CD8-positive, alpha-beta T cell (primary cell): ENCODE measurements at regions of chr2 and their contacts with region 1.

Region 1: GRCh38 chr2:12716282-12717190 is at the start of gene TRIB2:
- DNase-seq: peak; percentile 86 to 96 (median 91)
- ATAC-seq: peak; percentile 79
- H3K4me3 ChIP-seq: peak within 1 kb of the TSS; percentile 82 to 96
- H3K4me3 Mint-ChIP-seq: peak within 1 kb of the TSS; percentile 97
- H3K27ac ChIP-seq: peak within 1 kb of the TSS; percentile 72 to 81
- H3K27ac Mint-ChIP-seq: peak within 1 kb of the TSS; percentile 93
- H3K4me1 ChIP-seq: peaks cover 35% of the 10 kb centered on the region
- H3K4me1 Mint-ChIP-seq: peaks cover 46% of the 10 kb centered on the region
- H3K27me3 ChIP-seq: no peaks in the 10 kb centered on the region
- H3K27me3 Mint-ChIP-seq: no peaks in the 10 kb centered on the region
- CTCF ChIP-seq: peak; percentile 38
- total RNA-seq, gene TRIB2: 46.6 to 54.4 TPM

Region 2: DNA sequence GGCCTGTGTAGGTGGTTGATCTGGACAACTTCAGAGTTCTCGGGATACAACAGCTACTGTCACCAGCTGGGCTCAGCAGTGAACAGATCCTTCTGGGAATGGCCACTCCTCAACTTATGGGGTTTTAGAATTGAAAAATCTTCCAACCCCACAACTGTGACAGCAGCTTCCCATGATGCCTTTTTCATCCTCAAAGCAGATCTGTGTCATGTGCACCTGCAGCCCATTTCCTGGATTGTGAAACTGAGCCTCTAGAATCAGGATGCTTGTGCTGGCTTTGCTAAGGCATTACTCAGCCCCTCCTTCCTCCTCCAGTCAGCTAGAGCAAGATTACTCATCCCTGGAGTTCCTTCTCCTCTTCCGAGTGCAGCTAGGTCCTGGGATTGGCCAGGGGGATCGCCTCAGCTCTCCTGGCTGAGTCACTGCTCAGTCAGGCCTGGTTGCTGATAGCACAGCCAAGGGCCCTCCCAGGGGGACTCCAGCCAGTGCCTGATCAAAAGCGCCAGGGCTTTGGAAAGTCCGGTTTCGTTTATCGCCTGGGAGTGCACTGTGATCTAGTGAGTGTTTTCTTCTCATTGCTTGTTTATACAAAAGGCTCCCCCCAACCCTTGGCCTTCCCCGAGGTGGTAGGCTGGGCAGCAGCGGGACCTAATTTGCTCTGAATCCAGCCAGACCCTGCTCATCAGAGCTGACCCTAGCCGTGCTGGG is 972.5 kb before region 1 on chr2:
- CTCF ChIA-PET with region 1: no interaction called
- POLR2A ChIA-PET with region 1: no interaction called
- intact Hi-C with region 1: loop called (anchors 2 to 5 kb)
- DNase-seq: peak in 8 of 9 experiments; percentile 48 to 86 (median 68)
- ATAC-seq: peak; percentile 25
- H3K4me3 ChIP-seq: peak overlapping the region in 1 of 2 experiments; percentile 9
- H3K4me3 Mint-ChIP-seq: peak overlapping the region; percentile 54
- H3K27ac ChIP-seq: peak overlapping the region in 1 of 2 experiments; percentile 20
- H3K27ac Mint-ChIP-seq: peak overlapping the region; percentile 56
- H3K4me1 ChIP-seq: peaks cover 41% of the 10 kb centered on the region
- H3K4me1 Mint-ChIP-seq: peaks cover 46% of the 10 kb centered on the region
- H3K27me3 ChIP-seq: no peaks in the 10 kb centered on the region
- H3K27me3 Mint-ChIP-seq: no peaks in the 10 kb centered on the region
- CTCF ChIP-seq: no peak

Region 3: DNA sequence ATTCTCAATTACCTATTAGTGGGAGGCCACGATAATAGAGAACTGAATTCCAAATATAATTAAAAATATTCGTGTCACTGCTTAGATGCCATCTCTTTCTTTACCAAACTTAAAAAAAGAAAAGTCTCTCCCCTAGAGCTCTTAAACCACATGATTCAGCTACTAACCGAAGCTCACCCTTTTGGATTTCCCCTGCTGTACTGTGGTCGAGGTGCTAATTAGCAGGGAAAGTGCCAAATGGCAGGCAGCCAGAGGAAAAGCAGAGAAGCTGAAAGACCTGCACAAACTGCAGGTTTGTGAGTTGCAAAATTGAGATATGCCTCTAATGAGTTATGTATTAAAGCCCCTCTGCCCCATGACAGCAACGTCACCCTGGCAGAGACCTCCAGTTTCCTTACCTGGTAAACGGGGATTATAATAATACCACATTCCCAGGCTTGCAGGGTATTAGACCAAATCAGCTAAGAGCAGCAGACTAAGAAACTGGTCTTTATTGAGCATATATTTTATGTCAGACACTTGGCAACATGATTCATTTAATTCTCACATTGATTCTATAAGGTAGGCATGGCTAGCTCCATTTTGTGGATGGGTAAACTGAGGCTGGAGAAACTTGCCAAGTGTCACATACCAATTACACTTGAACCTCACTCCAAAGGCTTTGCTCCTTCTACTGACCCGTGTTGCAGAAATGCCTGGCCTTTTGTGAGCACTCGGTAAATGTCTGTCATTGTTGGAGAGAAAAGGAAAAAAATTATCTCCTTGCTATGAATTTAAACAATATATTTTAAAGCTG is 710.5 kb before region 1 on chr2:
- CTCF ChIA-PET with region 1: no interaction called
- POLR2A ChIA-PET with region 1: interaction called, 6 read pairs
- intact Hi-C with region 1: loop called in 1 of 2 experiments (anchors 5 kb)
- DNase-seq: peak; percentile 38 to 93 (median 73)
- ATAC-seq: peak; percentile 92
- H3K4me3 ChIP-seq: no peak overlapping the region
- H3K4me3 Mint-ChIP-seq: no peak overlapping the region
- H3K27ac ChIP-seq: no peak overlapping the region
- H3K27ac Mint-ChIP-seq: peak overlapping the region; percentile 46
- H3K4me1 ChIP-seq: peaks cover 18% of the 10 kb centered on the region
- H3K4me1 Mint-ChIP-seq: peaks cover 27% of the 10 kb centered on the region
- H3K27me3 ChIP-seq: peaks cover 0 to 16% of the 10 kb centered on the region in 2 experiments
- H3K27me3 Mint-ChIP-seq: peaks cover 21% of the 10 kb centered on the region
- CTCF ChIP-seq: no peak

Region 4: GRCh38 chr2:12303181-12304030 is 413.1 kb before region 1 on chr2:
- CTCF ChIA-PET with region 1: no interaction called
- POLR2A ChIA-PET with region 1: interaction called, 4 read pairs
- intact Hi-C with region 1: loop called in 1 of 2 experiments (anchors 10 kb)
- DNase-seq: peak in 4 of 9 experiments; percentile 11 to 45 (median 26)
- ATAC-seq: peak; percentile 57
- H3K4me3 ChIP-seq: no peak overlapping the region
- H3K4me3 Mint-ChIP-seq: peak overlapping the region; percentile 27
- H3K27ac ChIP-seq: no peak overlapping the region
- H3K27ac Mint-ChIP-seq: peak overlapping the region; percentile 75
- H3K4me1 ChIP-seq: peaks cover 30% of the 10 kb centered on the region
- H3K4me1 Mint-ChIP-seq: peaks cover 39% of the 10 kb centered on the region
- H3K27me3 ChIP-seq: no peaks in the 10 kb centered on the region
- H3K27me3 Mint-ChIP-seq: no peaks in the 10 kb centered on the region
- CTCF ChIP-seq: no peak

Region 5: DNA sequence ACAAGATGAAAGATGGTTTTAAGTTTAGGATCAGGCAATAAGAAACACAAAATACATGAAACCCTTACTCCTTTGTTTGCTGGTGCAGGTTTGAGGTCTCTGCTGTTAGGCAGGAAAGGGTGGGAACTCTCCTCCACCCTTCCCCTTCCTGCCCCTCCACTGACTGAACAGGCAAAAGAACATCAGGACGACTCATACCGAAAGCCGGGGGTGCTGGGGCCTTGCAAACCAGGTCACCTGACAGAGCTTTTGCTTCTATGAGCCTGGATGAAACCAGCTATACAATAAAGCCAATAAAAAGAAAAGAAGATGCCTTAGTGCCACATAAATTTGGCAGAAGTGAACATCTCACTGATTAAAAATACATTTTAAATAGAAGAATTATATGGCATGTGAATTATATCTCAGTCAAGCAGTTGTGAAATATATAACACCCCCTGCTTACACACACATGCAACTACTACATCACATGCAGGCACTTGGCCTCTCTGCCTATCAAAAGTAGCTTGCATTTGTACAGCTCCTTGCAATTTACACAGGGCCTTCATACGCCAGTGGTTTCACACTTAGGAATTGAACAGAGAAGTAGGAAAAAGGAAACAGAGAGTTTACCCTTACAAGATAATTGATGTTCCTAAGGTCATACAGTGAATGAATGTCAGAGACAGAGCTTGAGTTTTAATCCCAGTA is 214.9 kb before region 1 on chr2:
- CTCF ChIA-PET with region 1: interaction called, 13 read pairs
- POLR2A ChIA-PET with region 1: interaction called, 12 read pairs
- intact Hi-C with region 1: loop called in 1 of 2 experiments (anchors 5 kb)
- DNase-seq: peak in 8 of 9 experiments; percentile 45 to 84 (median 63)
- ATAC-seq: peak; percentile 85
- H3K4me3 ChIP-seq: no peak overlapping the region
- H3K4me3 Mint-ChIP-seq: peak overlapping the region; percentile 65
- H3K27ac ChIP-seq: peak overlapping the region; percentile 36 to 80
- H3K27ac Mint-ChIP-seq: peak overlapping the region; percentile 91
- H3K4me1 ChIP-seq: peaks cover 95% of the 10 kb centered on the region
- H3K4me1 Mint-ChIP-seq: peaks cover 98% of the 10 kb centered on the region
- H3K27me3 ChIP-seq: no peaks in the 10 kb centered on the region
- H3K27me3 Mint-ChIP-seq: no peaks in the 10 kb centered on the region
- CTCF ChIP-seq: no peak

Region 6: GRCh38 chr2:12675352-12675795 is 41.2 kb before region 1 on chr2:
- CTCF ChIA-PET with region 1: no interaction called
- POLR2A ChIA-PET with region 1: no interaction called
- intact Hi-C with region 1: no loop called
- DNase-seq: peak in 1 of 9 experiments; percentile 12
- ATAC-seq: no peak
- H3K4me3 ChIP-seq: no peak overlapping the region
- H3K4me3 Mint-ChIP-seq: no peak overlapping the region
- H3K27ac ChIP-seq: no peak overlapping the region
- H3K27ac Mint-ChIP-seq: no peak overlapping the region
- H3K4me1 ChIP-seq: no peaks in the 10 kb centered on the region
- H3K4me1 Mint-ChIP-seq: no peaks in the 10 kb centered on the region
- H3K27me3 ChIP-seq: no peaks in the 10 kb centered on the region
- H3K27me3 Mint-ChIP-seq: no peaks in the 10 kb centered on the region
- CTCF ChIP-seq: no peak

Region 7: DNA sequence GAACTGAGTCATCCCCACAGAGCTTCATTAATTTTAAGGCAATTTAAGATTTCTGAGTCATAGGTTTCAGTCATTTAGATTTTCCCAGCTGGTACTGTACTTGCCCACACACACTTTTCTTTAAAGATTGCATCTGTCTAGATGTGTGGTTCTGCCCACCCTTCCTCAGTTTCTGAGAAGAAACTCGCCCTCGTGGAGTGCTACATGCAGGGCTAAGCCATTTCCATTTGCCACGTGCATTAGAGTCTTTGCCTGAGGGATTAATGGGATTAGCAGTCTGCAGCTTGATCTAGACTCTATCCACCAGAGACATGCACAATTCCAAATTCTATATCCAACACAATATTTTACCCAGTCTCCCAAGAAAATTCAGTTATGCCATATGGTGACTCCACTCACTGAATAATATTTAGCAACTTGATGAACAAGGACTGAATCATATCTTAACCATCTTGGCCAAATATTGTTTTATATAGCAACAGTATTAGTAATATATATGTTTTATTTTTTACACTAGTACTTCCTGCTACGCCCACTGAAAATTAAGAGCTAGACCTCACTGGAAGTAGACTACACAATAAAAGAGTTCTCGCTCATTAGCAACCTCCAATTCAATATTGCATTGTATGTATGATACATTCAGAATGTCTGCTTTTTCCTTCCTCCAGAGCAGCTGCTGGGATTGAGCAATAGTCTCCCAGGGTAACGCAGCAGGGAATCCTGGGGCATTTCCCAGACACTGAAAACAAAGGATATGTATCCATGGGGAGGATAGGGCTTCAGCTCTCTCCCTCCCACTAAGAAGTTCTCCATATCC is 14.0 kb before region 1 on chr2:
- CTCF ChIA-PET with region 1: interaction called, 11 read pairs
- POLR2A ChIA-PET with region 1: interaction called, 9 read pairs
- intact Hi-C with region 1: no loop called
- DNase-seq: no peak
- ATAC-seq: no peak
- H3K4me3 ChIP-seq: no peak overlapping the region
- H3K4me3 Mint-ChIP-seq: no peak overlapping the region
- H3K27ac ChIP-seq: no peak overlapping the region
- H3K27ac Mint-ChIP-seq: no peak overlapping the region
- H3K4me1 ChIP-seq: peaks cover 9% of the 10 kb centered on the region
- H3K4me1 Mint-ChIP-seq: peaks cover 26% of the 10 kb centered on the region
- H3K27me3 ChIP-seq: no peaks in the 10 kb centered on the region
- H3K27me3 Mint-ChIP-seq: no peaks in the 10 kb centered on the region
- CTCF ChIP-seq: no peak

Region 8: DNA sequence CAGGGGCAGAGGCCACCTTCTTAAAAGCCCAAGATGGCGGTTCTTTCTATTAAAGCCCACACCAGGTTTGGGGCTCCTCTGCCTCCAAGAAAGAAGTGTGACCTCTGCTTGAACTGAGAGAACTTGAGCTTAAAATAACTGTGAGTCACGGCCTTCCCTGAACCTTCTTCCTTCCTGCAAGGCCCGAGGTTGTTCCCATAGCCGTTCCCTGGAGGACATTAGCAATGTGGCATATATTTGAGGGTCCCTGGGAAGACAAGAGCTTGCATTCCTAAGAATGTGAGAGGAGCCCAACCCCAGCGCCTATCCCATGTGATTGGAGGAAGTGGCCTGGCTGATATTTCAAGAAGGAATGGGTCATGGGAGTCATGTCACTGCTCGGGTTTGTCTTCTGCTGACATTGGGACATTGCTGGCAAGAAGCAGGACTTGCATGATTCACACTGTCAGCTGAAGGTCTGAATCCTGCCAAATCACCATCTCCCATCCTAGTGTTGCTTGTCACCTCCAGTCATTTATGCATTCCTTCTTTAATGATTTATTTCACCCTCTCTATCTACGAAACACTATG is 168.3 kb after region 1 on chr2:
- CTCF ChIA-PET with region 1: no interaction called
- POLR2A ChIA-PET with region 1: no interaction called
- intact Hi-C with region 1: no loop called
- DNase-seq: no peak
- ATAC-seq: no peak
- H3K4me3 ChIP-seq: no peak overlapping the region
- H3K4me3 Mint-ChIP-seq: no peak overlapping the region
- H3K27ac ChIP-seq: no peak overlapping the region
- H3K27ac Mint-ChIP-seq: no peak overlapping the region
- H3K4me1 ChIP-seq: no peaks in the 10 kb centered on the region
- H3K4me1 Mint-ChIP-seq: no peaks in the 10 kb centered on the region
- H3K27me3 ChIP-seq: no peaks in the 10 kb centered on the region
- H3K27me3 Mint-ChIP-seq: peaks cover 2% of the 10 kb centered on the region
- CTCF ChIP-seq: no peak

Region 9: GRCh38 chr2:13006829-13007717 is 290.5 kb after region 1 on chr2:
- CTCF ChIA-PET with region 1: interaction called, 28 read pairs
- POLR2A ChIA-PET with region 1: interaction called, 3 read pairs
- intact Hi-C with region 1: loop called (anchors 1 to 2 kb)
- DNase-seq: peak; percentile 27 to 77 (median 64)
- ATAC-seq: peak; percentile 56
- H3K4me3 ChIP-seq: no peak overlapping the region
- H3K4me3 Mint-ChIP-seq: no peak overlapping the region
- H3K27ac ChIP-seq: no peak overlapping the region
- H3K27ac Mint-ChIP-seq: no peak overlapping the region
- H3K4me1 ChIP-seq: no peaks in the 10 kb centered on the region
- H3K4me1 Mint-ChIP-seq: peaks cover 2% of the 10 kb centered on the region
- H3K27me3 ChIP-seq: no peaks in the 10 kb centered on the region
- H3K27me3 Mint-ChIP-seq: peaks cover 19% of the 10 kb centered on the region
- CTCF ChIP-seq: peak; percentile 95